GM12878 (cell line): ENCODE measurements at regions of chr1 and their contacts with region 1.

Region 1: GRCh38 chr1:39098546-39099250 is 72.5 kb downstream of the NDUFS5 start:
- DNase-seq: no peak
- ATAC-seq: peak; percentile 79
- H3K4me3 ChIP-seq: no peak overlapping the region
- H3K27ac ChIP-seq: no peak overlapping the region
- H3K4me1 ChIP-seq: peaks cover 13% of the 10 kb centered on the region
- H3K27me3 ChIP-seq: no peaks in the 10 kb centered on the region
- CTCF ChIP-seq: peak; percentile 76 to 87 (median 86)
- EP300 ChIP-seq: no peak
- POLR2A ChIP-seq: no peak
- RAD21 ChIP-seq: peak; percentile 96

Region 2: GRCh38 chr1:39132505-39133339 is 34.0 kb after region 1 on chr1:
- CTCF ChIA-PET with region 1: interaction called, 21 read pairs
- POLR2A ChIA-PET with region 1: no interaction called
- RAD21 ChIA-PET with region 1: interaction called, 4 read pairs
- SMC1A ChIA-PET with region 1: no interaction called
- in situ Hi-C with region 1: no loop called
- intact Hi-C with region 1: no loop called
- DNase-seq: no peak
- ATAC-seq: no peak
- H3K4me3 ChIP-seq: no peak overlapping the region
- H3K27ac ChIP-seq: no peak overlapping the region
- H3K4me1 ChIP-seq: no peaks in the 10 kb centered on the region
- H3K27me3 ChIP-seq: no peaks in the 10 kb centered on the region
- CTCF ChIP-seq: no peak
- EP300 ChIP-seq: no peak
- POLR2A ChIP-seq: no peak
- RAD21 ChIP-seq: no peak

Region 3: DNA sequence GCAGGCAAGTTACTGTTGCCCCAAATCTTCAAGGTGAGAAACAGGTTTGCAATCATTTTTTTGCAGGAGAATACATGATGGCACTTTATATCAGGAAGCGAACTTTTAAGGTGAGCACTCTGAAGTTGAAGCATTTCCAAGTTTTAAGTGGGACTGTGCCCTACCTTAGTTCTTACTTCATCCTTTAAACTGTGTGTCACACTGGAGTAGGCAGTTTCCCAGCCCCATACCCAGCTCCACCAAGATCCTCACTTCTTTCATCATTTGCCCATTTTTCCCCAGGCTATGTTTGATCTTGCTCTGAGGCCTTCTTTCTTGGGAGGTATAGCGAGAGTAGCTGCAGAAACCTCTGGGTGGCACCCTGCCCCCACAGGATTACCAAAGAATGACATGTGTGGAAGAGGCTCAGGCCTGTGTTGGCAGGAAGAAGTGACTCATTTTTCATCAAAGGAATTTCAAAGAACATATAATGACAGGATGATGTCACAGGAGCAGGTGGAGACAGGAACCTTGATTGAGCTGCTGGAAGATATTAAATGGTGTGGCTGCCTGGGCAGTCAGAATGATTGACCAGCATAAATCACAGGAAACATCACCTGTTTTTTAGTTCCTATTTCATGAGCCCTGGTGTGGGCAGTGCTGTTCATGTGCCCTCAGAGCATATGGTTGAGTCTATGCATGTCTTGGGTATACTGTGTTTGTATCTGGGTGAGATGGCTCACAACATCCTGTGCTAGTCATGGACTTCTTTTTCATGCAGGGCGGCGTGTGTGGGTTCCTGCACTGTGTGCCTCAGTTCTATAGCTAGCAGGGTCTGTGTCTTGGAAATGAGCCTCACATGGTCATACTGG is 85.0 kb after region 1 on chr1:
- CTCF ChIA-PET with region 1: interaction called, 465 read pairs
- POLR2A ChIA-PET with region 1: no interaction called
- RAD21 ChIA-PET with region 1: interaction called, 304 read pairs
- SMC1A ChIA-PET with region 1: interaction called, 164 read pairs
- in situ Hi-C with region 1: no loop called
- intact Hi-C with region 1: no loop called
- DNase-seq: no peak
- ATAC-seq: peak; percentile 87
- H3K4me3 ChIP-seq: no peak overlapping the region
- H3K27ac ChIP-seq: peak overlapping the region; percentile 1; the same call in 1 of the 2 replicates
- H3K4me1 ChIP-seq: peaks cover 15% of the 10 kb centered on the region
- H3K27me3 ChIP-seq: no peaks in the 10 kb centered on the region
- CTCF ChIP-seq: peak; percentile 55 to 59 (median 57)
- EP300 ChIP-seq: no peak
- POLR2A ChIP-seq: no peak
- RAD21 ChIP-seq: peak; percentile 45

Region 4: DNA sequence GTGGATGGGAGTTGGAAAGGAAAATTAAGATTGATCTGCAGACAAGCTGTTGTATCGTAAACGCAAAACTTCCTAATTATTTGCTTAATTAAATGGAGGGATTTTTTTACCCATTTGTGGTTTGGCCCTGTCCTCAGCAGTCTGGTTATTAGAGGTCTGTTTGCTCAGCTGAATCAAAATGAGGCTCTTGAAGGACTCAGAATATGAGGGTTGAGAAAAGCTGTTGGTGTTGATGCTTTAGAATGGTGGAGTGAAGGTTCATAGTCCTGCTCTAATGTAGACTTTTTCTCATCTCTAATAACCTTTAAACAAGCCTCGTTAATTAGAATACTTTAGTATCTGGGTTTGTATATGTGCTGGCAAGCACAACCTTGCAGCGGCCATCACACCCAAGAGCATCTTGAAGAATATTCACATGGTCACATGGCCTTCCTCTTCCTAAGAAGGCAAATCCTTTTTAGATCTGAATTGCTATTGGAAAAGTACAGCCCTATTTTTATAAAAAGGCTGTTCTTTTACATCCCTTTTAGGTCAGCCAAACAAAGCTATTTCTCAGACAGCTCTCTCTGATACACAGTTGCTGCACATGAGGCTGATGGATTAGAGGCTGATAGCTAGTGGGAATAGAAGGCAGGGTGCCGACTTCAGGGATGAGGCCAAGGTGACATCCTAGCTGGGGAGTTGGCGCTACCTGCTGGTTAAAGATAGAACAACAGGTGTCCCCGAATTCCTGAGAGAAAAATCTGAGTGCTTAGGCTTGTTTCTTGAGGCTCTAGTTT is 159.6 kb after region 1 on chr1:
- CTCF ChIA-PET with region 1: interaction called, 88 read pairs
- POLR2A ChIA-PET with region 1: no interaction called
- RAD21 ChIA-PET with region 1: interaction called, 25 read pairs
- SMC1A ChIA-PET with region 1: interaction called, 52 read pairs
- in situ Hi-C with region 1: loop called (anchors 5 kb)
- intact Hi-C with region 1: loop called (anchors 1 kb)
- DNase-seq: no peak
- ATAC-seq: peak; percentile 69
- H3K4me3 ChIP-seq: no peak overlapping the region
- H3K27ac ChIP-seq: no peak overlapping the region
- H3K4me1 ChIP-seq: peaks cover 27% of the 10 kb centered on the region
- H3K27me3 ChIP-seq: no peaks in the 10 kb centered on the region
- CTCF ChIP-seq: peak; percentile 81 to 90 (median 85)
- EP300 ChIP-seq: no peak
- POLR2A ChIP-seq: no peak
- RAD21 ChIP-seq: peak; percentile 90

Region 5: GRCh38 chr1:39288735-39289465 is 190.2 kb after region 1 on chr1:
- CTCF ChIA-PET with region 1: no interaction called
- POLR2A ChIA-PET with region 1: no interaction called
- RAD21 ChIA-PET with region 1: no interaction called
- SMC1A ChIA-PET with region 1: no interaction called
- in situ Hi-C with region 1: no loop called
- intact Hi-C with region 1: no loop called
- DNase-seq: no peak
- ATAC-seq: no peak
- H3K4me3 ChIP-seq: no peak overlapping the region
- H3K27ac ChIP-seq: no peak overlapping the region
- H3K4me1 ChIP-seq: no peaks in the 10 kb centered on the region
- H3K27me3 ChIP-seq: no peaks in the 10 kb centered on the region
- CTCF ChIP-seq: no peak
- EP300 ChIP-seq: no peak
- POLR2A ChIP-seq: no peak
- RAD21 ChIP-seq: no peak

Region 6: GRCh38 chr1:39317910-39318633 is 219.4 kb after region 1 on chr1:
- CTCF ChIA-PET with region 1: interaction called, 5 read pairs
- POLR2A ChIA-PET with region 1: no interaction called
- RAD21 ChIA-PET with region 1: no interaction called
- SMC1A ChIA-PET with region 1: interaction called, 3 read pairs
- in situ Hi-C with region 1: no loop called
- intact Hi-C with region 1: loop called (anchors 2 kb)
- DNase-seq: no peak
- ATAC-seq: no peak
- H3K4me3 ChIP-seq: no peak overlapping the region
- H3K27ac ChIP-seq: no peak overlapping the region
- H3K4me1 ChIP-seq: peaks cover 16% of the 10 kb centered on the region
- H3K27me3 ChIP-seq: no peaks in the 10 kb centered on the region
- CTCF ChIP-seq: no peak
- EP300 ChIP-seq: no peak
- POLR2A ChIP-seq: no peak
- RAD21 ChIP-seq: no peak

Region 7: GRCh38 chr1:39538588-39539465 is 440.1 kb after region 1 on chr1:
- CTCF ChIA-PET with region 1: interaction called, 27 read pairs
- POLR2A ChIA-PET with region 1: no interaction called
- RAD21 ChIA-PET with region 1: interaction called, 6 read pairs
- SMC1A ChIA-PET with region 1: interaction called, 8 read pairs
- in situ Hi-C with region 1: loop called (anchors 5 kb)
- intact Hi-C with region 1: loop called (anchors 2 kb)
- DNase-seq: peak; percentile 27
- ATAC-seq: peak; percentile 100
- H3K4me3 ChIP-seq: no peak overlapping the region
- H3K27ac ChIP-seq: no peak overlapping the region
- H3K4me1 ChIP-seq: peaks cover 10% of the 10 kb centered on the region
- H3K27me3 ChIP-seq: no peaks in the 10 kb centered on the region
- CTCF ChIP-seq: peak; percentile 89 to 91 (median 90)
- EP300 ChIP-seq: no peak
- POLR2A ChIP-seq: no peak
- RAD21 ChIP-seq: peak; percentile 93